BJ (cell line): ENCODE measurements at regions of chr7 and their contacts with region 1.

Region 1: DNA sequence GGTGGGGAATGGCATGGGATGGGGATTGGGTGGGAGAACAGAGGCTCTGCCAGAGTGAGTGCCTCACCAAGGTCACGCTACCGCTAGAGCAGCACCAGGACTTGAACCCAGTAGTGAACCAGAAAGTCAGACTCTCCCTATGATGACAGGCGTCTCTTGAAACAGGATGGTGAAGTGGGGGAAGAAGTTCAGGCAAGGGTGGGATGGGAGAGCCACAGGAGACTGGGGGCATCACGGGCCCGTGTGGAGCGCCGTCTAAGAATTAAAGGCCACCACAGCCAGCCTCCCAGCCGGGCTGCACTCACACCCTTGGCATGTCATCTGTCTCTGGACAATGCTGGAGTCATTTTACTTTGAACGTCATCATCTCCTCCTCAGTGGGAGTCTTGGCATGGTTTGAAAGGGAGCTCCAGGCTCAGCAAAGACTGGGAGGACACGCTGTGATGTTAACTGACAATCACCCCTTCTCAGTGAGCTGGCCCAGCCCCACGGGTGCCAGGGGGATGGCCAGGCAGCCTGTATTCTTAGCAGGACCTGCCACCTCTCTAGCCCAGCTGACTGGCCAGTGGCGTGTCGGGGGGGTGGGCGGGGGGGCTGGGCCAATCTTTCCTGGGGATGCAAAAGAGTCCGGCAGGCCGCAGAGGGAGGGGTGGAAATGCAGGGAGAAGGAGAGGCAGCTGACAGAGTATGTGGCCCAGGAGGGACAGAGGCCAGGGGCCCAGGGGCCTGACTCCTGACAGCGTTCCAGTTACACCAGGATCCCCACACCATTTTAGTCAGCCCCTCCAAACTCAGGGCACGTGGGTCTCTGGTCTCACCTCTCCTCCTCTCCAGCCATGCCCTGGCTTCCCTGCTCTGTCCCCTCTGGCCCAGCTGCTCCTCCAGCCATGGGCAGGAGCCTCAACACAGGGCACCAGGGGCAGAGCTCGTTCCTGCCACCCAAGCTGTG is 96.2 kb downstream of the VOPP1 start:
- DNase-seq: no peak
- H3K4me3 ChIP-seq: no peak overlapping the region
- H3K27me3 ChIP-seq: no peaks in the 10 kb centered on the region
- CTCF ChIP-seq: no peak

Region 2: GRCh38 chr7:55271069-55271626 is 205.0 kb before region 1 on chr7:
- CTCF ChIA-PET with region 1: no interaction called
- POLR2A ChIA-PET with region 1: no interaction called
- DNase-seq: no peak
- H3K4me3 ChIP-seq: no peak overlapping the region
- H3K27me3 ChIP-seq: peaks cover 24% of the 10 kb centered on the region
- CTCF ChIP-seq: peak; percentile 70

Region 3: DNA sequence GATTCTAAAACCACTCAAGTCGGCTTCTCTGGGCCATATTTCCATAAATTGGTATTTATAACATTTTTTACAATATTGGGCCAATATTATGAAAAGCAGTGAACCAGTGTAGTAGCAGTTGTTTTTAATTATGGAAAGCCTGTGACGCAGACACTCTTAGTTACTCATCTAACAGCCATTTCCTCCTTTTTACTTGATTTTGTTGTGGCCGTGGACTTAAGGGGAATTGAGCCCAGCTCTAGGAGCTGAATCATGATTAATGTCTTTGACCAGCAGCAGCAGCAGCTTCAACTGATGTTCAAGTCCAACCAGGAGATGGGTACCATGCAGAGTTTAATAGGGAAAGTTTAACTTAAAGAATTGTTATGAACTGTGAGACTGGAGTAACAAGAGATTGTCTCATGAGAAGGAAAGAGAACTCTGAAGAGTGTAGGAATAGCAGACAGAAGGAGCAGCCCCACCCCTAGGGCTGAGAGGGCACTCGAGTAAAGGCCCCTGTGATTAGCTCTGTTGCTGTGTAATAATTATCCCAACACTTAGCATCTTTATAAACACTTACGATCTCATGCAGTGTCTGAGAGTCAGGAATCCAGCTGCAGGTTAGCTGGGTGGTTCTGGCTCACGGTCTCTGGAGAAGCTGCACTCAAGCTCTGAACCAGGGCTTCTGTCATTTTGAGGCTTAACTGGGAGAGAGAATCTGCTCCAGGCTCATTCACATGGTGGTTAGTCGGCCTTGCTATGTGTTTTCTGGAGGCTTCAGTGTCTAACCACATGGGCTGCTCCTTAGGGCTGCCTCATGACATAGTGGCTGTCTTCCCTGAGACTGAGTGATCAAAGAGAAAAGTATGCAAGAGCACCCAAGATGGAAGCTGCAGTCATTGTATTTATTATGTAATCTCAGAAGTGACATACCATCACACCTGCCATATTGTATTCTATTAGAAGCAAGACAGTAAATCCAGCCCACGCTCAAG is 106.4 kb before region 1 on chr7:
- CTCF ChIA-PET with region 1: no interaction called
- POLR2A ChIA-PET with region 1: no interaction called
- DNase-seq: peak; percentile 81
- H3K4me3 ChIP-seq: no peak overlapping the region
- H3K27me3 ChIP-seq: no peaks in the 10 kb centered on the region
- CTCF ChIP-seq: no peak

Region 4: DNA sequence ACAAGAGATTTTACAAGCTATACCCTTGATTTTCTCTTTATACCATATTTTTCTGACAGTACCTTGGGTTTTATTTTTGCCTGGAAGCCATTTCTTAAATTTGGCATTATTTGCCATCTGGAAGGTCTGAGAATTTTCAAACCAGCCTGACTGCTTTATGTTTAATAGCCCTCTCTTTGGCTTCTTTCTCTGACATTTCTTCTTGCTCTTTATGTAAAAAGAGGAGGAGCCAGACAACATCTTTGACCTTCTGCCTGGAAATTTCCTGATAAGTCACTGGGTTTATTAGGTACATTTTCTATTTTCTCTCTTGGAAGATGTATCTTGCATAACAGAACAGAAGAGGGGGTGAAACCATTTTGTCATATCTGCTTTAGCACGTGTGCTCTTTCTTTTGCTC is 31.3 kb before region 1 on chr7:
- CTCF ChIA-PET with region 1: no interaction called
- POLR2A ChIA-PET with region 1: interaction called, 12 read pairs
- DNase-seq: no peak
- H3K4me3 ChIP-seq: no peak overlapping the region
- H3K27me3 ChIP-seq: no peaks in the 10 kb centered on the region
- CTCF ChIP-seq: no peak

Region 5: DNA sequence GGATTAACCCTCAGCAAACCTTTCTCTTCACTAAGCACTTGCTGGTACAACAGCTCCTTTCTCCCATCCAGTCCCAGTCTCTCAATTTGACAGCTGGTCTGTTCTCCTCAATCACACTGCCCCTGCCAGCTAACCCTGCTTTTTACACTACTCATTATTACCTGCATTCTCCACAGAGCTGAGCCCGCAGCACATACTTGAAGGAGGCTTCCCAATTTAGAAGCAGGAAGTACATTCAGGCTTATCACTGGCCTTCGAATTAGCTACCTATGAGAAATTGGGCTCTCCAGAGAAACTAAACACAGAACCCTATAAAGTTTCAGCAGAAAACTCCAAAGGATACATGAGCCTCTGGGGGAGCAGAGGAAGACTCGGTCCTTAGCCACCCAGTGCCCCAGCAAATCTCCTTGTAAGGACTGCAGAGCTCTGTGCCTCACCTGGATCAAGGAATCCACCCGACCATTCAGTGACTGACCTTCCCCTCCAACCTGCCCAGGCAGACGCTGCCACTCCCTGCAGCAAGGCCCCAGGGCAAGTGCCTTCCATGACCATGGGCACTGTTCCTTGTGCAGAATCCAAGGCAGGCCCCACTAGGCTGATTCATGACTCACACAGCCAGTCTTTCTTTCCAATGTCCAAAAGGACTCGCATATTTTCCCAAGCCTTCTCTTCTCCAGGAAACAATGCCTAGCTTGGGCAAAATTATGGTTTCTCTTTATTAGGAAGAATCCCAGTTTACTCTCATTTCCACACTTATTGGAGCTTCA is 28.1 kb after region 1 on chr7:
- CTCF ChIA-PET with region 1: no interaction called
- POLR2A ChIA-PET with region 1: no interaction called
- DNase-seq: no peak
- H3K4me3 ChIP-seq: no peak overlapping the region
- H3K27me3 ChIP-seq: no peaks in the 10 kb centered on the region
- CTCF ChIP-seq: no peak